ENCODE measurements at regions of chr12 and their contacts with region 1.

Region 1: DNA sequence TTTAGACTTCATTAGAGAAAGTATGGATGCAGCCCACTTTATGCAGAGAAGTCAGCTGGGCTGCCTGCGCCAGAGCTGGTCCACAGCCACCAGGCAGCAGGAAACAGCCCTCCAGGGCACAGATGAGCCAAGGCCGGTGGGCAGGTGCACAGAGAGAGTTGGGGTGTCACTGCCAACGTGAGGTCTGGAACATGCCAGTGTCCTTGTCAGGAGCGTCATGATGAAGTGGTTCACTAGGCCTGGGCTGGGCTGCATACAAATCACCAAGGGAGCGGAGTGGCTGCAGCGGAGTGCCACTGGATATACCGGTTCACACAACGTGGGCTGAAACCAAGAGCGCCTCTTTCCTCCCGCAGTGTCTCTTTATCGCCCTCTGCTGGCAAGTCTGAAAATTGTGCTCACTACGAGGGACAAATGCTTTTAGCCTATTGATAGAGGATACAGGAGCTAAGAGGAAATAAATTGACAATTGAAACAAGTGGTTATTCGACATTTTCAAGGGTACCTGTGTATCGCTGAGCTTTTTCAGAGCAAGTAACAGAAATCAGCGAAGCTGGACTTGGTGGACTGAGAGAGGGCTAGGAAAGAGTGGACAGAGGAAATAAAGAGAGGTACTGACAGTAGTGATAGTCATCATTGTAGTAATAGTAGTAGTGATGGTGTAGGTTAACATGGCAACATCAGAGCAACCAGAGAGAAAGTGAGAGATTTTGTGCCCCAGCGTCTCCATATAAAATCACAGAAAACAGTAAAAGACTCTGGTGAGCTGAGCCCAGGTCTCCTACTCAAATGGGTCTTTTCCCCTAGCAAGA is 52.0 kb upstream of the ITPR2 start:
- DNase-seq: peak; percentile 45
- ATAC-seq: peak; percentile 96
- H3K4me3 Mint-ChIP-seq: peak overlapping the region; percentile 76
- H3K27ac Mint-ChIP-seq: peak overlapping the region; percentile 54
- H3K4me1 Mint-ChIP-seq: peaks cover 8% of the 10 kb centered on the region
- H3K27me3 Mint-ChIP-seq: no peaks in the 10 kb centered on the region
- CTCF ChIP-seq: peak; percentile 86

Region 2: GRCh38 chr12:26097046-26097878 is 787.7 kb before region 1 on chr12:
- CTCF ChIA-PET with region 1: no interaction called
- POLR2A ChIA-PET with region 1: no interaction called
- intact Hi-C with region 1: loop called (anchors 1 kb)
- DNase-seq: peak; percentile 39
- ATAC-seq: peak; percentile 100
- H3K4me3 Mint-ChIP-seq: no peak overlapping the region
- H3K27ac Mint-ChIP-seq: no peak overlapping the region
- H3K4me1 Mint-ChIP-seq: peaks cover 5% of the 10 kb centered on the region
- H3K27me3 Mint-ChIP-seq: no peaks in the 10 kb centered on the region
- CTCF ChIP-seq: peak; percentile 88

Region 3: DNA sequence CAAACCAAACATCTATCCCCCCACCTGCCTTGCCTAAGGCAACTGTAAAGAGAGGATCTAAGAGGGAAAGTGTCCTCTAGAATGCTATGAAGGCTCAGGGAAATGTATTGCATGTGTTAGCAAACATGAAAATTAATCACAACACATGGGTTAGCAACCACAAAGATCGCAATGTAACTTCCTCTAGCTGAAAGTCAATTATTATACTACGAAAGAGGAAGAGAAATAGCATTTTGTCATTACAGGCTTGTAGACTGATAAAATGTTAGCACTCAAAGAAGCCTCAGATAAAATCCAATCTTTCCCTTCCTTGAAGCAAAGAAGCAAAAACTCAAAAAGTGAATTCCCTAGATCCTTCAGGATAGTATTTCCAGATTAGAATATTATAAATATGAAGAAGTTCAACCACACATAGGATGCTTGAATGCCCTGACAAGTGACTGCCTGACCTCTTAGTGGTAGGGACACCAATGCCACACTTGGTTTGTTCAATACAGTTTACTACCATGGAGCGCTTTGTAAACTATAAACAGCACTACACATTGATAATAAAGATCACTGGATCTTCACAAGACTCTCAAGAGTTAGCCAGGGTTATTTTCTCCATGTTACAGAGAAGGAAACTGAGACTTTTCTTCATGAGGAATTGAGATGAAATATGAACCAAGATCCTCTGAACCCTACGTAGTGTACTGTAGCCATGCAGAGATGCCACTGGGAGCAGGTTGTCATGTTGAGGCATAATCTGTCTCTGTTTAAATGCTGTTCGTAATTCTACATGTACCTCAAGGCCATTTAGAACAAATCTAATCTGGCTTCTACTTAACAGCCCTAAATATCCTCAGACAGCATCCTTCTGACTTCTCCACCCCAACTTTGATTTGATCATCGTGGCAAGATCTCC is 152.7 kb before region 1 on chr12:
- CTCF ChIA-PET with region 1: no interaction called
- POLR2A ChIA-PET with region 1: no interaction called
- intact Hi-C with region 1: loop called (anchors 5 kb)
- DNase-seq: no peak
- ATAC-seq: peak; percentile 74
- H3K4me3 Mint-ChIP-seq: peak overlapping the region; percentile 52
- H3K27ac Mint-ChIP-seq: peak overlapping the region; percentile 86
- H3K4me1 Mint-ChIP-seq: peaks cover 71% of the 10 kb centered on the region
- H3K27me3 Mint-ChIP-seq: no peaks in the 10 kb centered on the region
- CTCF ChIP-seq: no peak

Region 4: GRCh38 chr12:26863502-26863901 is 21.5 kb before region 1 on chr12:
- CTCF ChIA-PET with region 1: interaction called, 11 read pairs
- POLR2A ChIA-PET with region 1: no interaction called
- intact Hi-C with region 1: no loop called
- DNase-seq: no peak
- ATAC-seq: no peak
- H3K4me3 Mint-ChIP-seq: no peak overlapping the region
- H3K27ac Mint-ChIP-seq: no peak overlapping the region
- H3K4me1 Mint-ChIP-seq: peaks cover 9% of the 10 kb centered on the region
- H3K27me3 Mint-ChIP-seq: no peaks in the 10 kb centered on the region
- CTCF ChIP-seq: no peak

Region 5: DNA sequence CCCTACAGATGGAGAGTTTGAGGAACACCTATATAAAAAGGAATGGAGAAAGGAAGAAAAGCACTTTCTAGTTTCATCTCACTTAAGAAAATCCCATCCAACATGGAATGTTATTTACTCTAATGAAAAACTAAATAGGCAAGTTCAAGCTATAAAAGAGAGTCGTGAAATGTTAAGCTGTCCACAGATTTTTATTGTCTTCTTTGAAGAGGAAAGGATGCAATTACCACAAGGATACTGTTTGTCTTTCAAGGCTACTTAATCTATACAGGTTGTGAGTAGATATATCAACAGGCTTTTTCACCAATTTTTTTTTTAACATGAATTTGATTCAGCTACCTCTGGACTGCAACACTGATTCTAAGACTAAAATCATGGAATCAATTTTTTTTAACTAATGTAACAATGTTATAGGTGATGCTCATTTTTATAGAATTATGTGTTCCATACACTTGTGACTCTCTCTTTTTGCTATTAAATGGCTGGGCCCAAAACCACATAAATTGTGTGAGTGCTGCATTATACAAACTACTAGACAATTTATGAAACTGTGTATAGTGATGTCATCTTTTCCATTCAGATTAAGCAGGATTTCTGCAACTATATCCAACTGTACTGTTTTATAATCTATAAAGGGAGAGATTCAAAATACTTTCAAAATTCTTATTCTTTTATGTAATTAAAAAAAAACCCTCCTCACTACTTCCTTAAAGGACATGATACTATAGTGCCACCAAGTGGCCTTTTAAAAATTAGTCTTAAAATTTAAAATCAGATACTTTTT is 420.9 kb after region 1 on chr12:
- CTCF ChIA-PET with region 1: interaction called, 13 read pairs
- POLR2A ChIA-PET with region 1: no interaction called
- intact Hi-C with region 1: no loop called
- DNase-seq: no peak
- ATAC-seq: peak; percentile 34
- H3K4me3 Mint-ChIP-seq: no peak overlapping the region
- H3K27ac Mint-ChIP-seq: no peak overlapping the region
- H3K4me1 Mint-ChIP-seq: no peaks in the 10 kb centered on the region
- H3K27me3 Mint-ChIP-seq: no peaks in the 10 kb centered on the region
- CTCF ChIP-seq: peak; percentile 49

Measured in activated B cell treated with CpG ODN at 0.5 μM for 24 hours (primary cell).